Naive thymus-derived CD4-positive, alpha-beta T cell (primary cell): ENCODE measurements at regions of chr22 and their contacts with region 1.

Region 1: GRCh38 chr22:49657275-49657975 is 170.2 kb downstream of the BRD1 start:
- DNase-seq: peak; percentile 37 to 83 (median 74)
- ATAC-seq: peak; percentile 92
- H3K4me3 ChIP-seq: peak overlapping the region; percentile 87
- H3K4me3 Mint-ChIP-seq: peak overlapping the region; percentile 92 to 99 (median 94)
- H3K27ac ChIP-seq: peak overlapping the region; percentile 65
- H3K27ac Mint-ChIP-seq: peak overlapping the region; percentile 76 to 95 (median 90)
- H3K4me1 ChIP-seq: peaks cover 17 to 25% of the 10 kb centered on the region in 2 donors
- H3K4me1 Mint-ChIP-seq: peaks cover 16 to 55% (median 36%) of the 10 kb centered on the region in 7 donors
- H3K27me3 ChIP-seq: no peaks in the 10 kb centered on the region
- H3K27me3 Mint-ChIP-seq: no peaks in the 10 kb centered on the region

Region 2: DNA sequence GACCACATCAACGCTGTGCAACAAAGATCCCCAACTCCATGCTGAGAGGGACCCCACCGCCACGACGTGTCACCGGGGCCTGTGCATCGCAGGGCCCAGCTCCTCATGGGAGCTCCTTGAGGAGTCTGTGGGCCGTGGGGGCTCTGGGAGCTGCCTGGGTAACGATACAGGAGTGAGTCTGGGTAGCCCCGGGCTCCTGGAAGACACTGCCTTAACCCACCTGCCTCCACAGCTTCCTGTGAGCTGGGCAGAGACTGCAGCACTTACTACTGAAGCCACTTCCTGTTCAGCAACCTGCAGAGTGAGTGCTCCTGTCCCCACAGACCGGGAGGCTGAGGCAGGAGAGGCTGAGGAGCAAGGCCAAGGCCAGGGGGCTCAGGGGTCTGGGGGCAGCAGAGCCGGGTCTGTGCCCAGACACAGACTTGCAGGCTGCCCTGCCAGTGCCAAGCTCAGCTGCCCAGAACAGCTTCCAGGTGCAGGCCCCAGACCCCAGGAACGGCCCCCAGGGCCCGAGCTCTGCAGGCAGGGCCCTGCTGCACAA is 56.5 kb before region 1 on chr22:
- CTCF ChIA-PET with region 1: no interaction called
- POLR2A ChIA-PET with region 1: no interaction called
- intact Hi-C with region 1: no loop called
- DNase-seq: peak in 1 of 9 donors; percentile 9
- ATAC-seq: no peak
- H3K4me3 ChIP-seq: no peak overlapping the region
- H3K4me3 Mint-ChIP-seq: peak overlapping the region in 1 of 10 donors; percentile 11
- H3K27ac ChIP-seq: no peak overlapping the region
- H3K27ac Mint-ChIP-seq: peak overlapping the region in 1 of 9 donors; percentile 82
- H3K4me1 ChIP-seq: peaks cover 0 to 5% of the 10 kb centered on the region in 2 donors
- H3K4me1 Mint-ChIP-seq: peaks cover 2 to 15% (median 9%) of the 10 kb centered on the region in 7 donors
- H3K27me3 ChIP-seq: no peaks in the 10 kb centered on the region
- H3K27me3 Mint-ChIP-seq: no peaks in the 10 kb centered on the region

Region 3: GRCh38 chr22:49670456-49671330 is 13.3 kb after region 1 on chr22:
- CTCF ChIA-PET with region 1: no interaction called
- POLR2A ChIA-PET with region 1: interaction called, 4 read pairs
- intact Hi-C with region 1: loop called in 1 of 2 experiments (anchors 1 kb)
- DNase-seq: peak in 2 of 9 donors; percentile 23 to 49
- ATAC-seq: peak; percentile 52
- H3K4me3 ChIP-seq: peak overlapping the region; percentile 20
- H3K4me3 Mint-ChIP-seq: peak overlapping the region; percentile 49 to 89 (median 78)
- H3K27ac ChIP-seq: no peak overlapping the region
- H3K27ac Mint-ChIP-seq: peak overlapping the region in 6 of 9 donors; percentile 14 to 78 (median 54)
- H3K4me1 ChIP-seq: peaks cover 5 to 24% of the 10 kb centered on the region in 2 donors
- H3K4me1 Mint-ChIP-seq: peaks cover 14 to 41% (median 33%) of the 10 kb centered on the region in 7 donors
- H3K27me3 ChIP-seq: no peaks in the 10 kb centered on the region
- H3K27me3 Mint-ChIP-seq: peaks cover 10 to 50% (median 10%) of the 10 kb centered on the region in 5 donors

Region 4: DNA sequence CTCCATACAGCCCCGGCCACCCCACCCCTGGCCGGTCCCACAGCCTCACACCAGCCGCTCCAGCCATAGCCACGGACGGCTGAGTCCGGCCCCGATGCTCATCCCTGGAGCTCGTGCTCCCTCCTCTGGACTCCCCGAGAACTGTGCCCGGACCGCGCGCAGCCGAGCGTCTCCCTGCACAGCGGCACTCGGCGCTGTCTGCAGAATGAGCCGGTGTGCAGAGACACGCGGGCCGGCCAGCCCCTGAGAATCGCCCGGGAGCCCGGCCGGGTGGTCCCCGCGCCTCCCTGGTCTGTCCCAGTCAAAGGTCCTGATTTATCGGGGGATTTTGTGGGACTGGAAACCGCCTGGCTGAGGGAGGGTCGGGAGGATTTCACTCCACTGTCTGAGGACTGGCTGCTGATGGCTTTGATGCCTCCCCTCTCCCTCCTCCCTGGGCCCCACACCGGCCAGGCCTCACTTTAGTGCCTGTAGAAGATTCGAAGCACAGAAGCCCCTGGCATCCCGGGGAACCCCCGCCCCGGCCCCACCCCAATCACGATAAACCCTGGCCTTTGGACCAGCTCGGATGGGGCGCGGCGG is 67.6 kb after region 1 on chr22:
- CTCF ChIA-PET with region 1: no interaction called
- POLR2A ChIA-PET with region 1: no interaction called
- intact Hi-C with region 1: loop called in 1 of 2 experiments (anchors 5 kb)
- DNase-seq: peak; percentile 37 to 79 (median 63)
- ATAC-seq: peak; percentile 83
- H3K4me3 ChIP-seq: peak overlapping the region; percentile 69
- H3K4me3 Mint-ChIP-seq: peak overlapping the region; percentile 32 to 99 (median 84)
- H3K27ac ChIP-seq: peak overlapping the region; percentile 65
- H3K27ac Mint-ChIP-seq: peak overlapping the region in 2 of 9 donors; percentile 52 to 84
- H3K4me1 ChIP-seq: peaks cover 5 to 10% of the 10 kb centered on the region in 2 donors
- H3K4me1 Mint-ChIP-seq: peaks cover 3 to 35% (median 24%) of the 10 kb centered on the region in 7 donors
- H3K27me3 ChIP-seq: peaks cover 0 to 5% of the 10 kb centered on the region in 2 donors
- H3K27me3 Mint-ChIP-seq: peaks cover 10 to 38% (median 20%) of the 10 kb centered on the region in 5 donors